ENCODE measurements at regions of chr5 and their contacts with region 1.

Region 1: DNA sequence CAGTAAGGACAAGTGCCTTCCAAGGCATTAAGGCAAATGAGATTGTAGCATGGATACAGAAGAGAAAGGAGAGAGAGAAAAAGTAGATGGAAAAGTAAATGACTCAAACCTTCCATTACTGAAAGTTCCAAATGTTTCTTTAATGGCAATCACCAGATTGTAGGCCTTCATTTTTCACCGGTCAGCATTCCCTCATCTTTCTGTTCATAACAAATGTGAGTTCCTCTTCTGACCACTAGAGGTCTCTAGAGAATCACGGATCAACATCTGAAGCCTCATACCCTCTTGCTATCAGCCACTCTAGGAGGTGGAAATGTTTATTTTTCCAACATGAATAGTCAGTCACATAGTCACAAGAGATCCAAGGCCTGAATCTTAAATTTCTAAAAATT is 73.6 kb upstream of the RPS23 start:
- DNase-seq: no peak
- ATAC-seq: peak; percentile 60 to 83
- H3K4me3 ChIP-seq: no peak overlapping the region
- H3K27ac ChIP-seq: no peak overlapping the region
- H3K4me1 ChIP-seq: peaks cover 5% of the 10 kb centered on the region
- H3K27me3 ChIP-seq: no peaks in the 10 kb centered on the region

Region 2: GRCh38 chr5:82158755-82159413 is 192.9 kb before region 1 on chr5:
- intact Hi-C with region 1: no loop called
- DNase-seq: no peak
- ATAC-seq: no peak
- H3K4me3 ChIP-seq: no peak overlapping the region
- H3K27ac ChIP-seq: no peak overlapping the region
- H3K4me1 ChIP-seq: no peaks in the 10 kb centered on the region
- H3K27me3 ChIP-seq: no peaks in the 10 kb centered on the region

Region 3: DNA sequence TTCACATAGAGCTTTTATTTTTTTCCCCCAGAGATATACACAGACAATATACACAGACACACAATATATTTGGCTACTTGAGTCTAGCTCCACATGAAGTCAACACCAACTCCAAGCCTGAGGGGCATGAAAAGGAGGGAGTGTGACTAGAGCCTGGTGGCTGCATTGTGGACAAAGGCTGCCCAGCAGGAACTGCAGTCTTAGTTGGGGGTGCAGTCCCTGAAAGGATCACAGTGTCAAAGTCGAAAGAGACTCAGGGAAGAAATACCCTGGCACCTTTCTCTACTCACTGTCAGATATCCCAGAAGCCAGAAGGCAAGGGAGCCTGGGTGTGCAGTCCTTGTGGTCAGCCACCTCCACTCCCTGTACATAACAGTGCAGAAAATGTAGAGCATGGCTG is 158.0 kb after region 1 on chr5:
- intact Hi-C with region 1: no loop called
- DNase-seq: no peak
- ATAC-seq: no peak
- H3K4me3 ChIP-seq: no peak overlapping the region
- H3K27ac ChIP-seq: no peak overlapping the region
- H3K4me1 ChIP-seq: no peaks in the 10 kb centered on the region
- H3K27me3 ChIP-seq: no peaks in the 10 kb centered on the region

Region 4: DNA sequence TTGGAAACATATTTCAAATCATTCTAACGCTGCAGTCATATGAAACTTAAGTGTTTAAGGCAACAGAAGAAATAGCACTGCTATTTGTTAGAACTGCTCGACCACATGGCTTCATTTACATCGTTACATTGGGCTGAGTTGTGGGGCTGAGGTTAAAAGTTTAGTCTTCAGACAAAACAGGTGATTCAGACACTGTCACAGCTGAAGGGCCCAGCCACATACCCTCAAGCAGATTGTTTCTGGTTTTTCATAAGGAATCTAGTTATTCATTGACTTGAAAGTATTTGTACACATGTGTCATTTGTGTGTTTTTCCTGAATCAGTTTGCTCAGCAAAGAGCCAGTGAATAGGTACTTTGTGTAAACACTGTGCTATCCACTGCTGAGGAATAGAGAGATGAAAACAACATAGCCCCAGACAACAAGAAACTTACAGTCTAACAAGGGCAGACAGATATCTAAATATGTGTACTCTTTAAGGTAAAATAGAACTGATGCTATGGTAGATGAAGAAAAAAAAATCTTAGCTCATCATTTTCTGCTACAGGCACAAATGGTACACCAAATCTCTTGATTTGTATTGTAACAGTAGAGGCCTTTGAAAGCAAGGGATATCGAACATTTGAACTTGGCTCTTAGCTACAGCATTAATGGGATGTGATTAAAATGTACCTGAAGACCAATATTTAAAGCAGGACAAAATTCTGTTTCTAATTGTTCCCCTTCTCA is 284.0 kb after region 1 on chr5:
- intact Hi-C with region 1: loop called in 2 of 4 experiments (anchors 10 kb)
- DNase-seq: no peak
- ATAC-seq: no peak
- H3K4me3 ChIP-seq: no peak overlapping the region
- H3K27ac ChIP-seq: no peak overlapping the region
- H3K4me1 ChIP-seq: no peaks in the 10 kb centered on the region
- H3K27me3 ChIP-seq: no peaks in the 10 kb centered on the region

Region 5: GRCh38 chr5:83473346-83474163 is 1121.8 kb after region 1 on chr5:
- intact Hi-C with region 1: loop called in 1 of 4 experiments (anchors 10 kb)
- DNase-seq: peak; percentile 94 to 97 (median 96)
- ATAC-seq: peak; percentile 89 to 90
- H3K4me3 ChIP-seq: peak overlapping the region; percentile 49
- H3K27ac ChIP-seq: peak overlapping the region; percentile 76
- H3K4me1 ChIP-seq: no peaks in the 10 kb centered on the region
- H3K27me3 ChIP-seq: no peaks in the 10 kb centered on the region

Region 6: DNA sequence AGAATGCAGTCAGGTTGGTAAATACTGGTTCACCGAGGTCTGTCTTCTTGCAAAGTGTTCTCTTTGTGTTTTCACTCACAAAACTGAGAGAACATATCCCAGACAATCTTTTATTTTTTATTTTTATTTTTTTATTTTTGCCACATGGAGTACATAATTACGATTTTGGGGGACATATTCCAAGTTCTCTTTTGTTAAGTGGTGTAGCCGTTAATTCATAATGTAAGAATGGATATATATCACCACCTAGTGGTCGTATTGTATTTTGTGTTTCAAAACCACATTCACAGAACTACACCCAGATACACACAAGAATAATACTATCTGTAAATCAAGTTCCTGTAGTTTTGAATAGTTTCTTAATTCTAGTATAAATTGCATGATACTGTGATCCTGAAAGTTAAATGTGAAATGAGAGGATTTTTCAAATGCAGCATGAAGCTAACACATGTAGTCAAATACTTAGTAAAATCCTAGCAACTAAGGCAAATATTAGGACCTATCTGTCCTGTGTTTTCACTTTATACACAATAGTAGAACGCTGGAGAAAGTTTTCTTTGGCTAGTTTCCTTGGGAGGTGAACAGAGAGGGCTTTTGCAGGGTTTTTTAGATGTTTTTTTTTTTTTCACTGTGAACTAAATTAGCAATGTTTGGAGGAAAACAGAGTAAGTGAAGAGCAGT is 1212.5 kb after region 1 on chr5:
- intact Hi-C with region 1: loop called (anchors 2 to 10 kb)
- DNase-seq: no peak
- ATAC-seq: peak; percentile 56 to 70
- H3K4me3 ChIP-seq: no peak overlapping the region
- H3K27ac ChIP-seq: no peak overlapping the region
- H3K4me1 ChIP-seq: peaks cover 2% of the 10 kb centered on the region
- H3K27me3 ChIP-seq: no peaks in the 10 kb centered on the region

Measured in right cardiac atrium (tissue), 5 donors.